Right ventricle myocardium inferior (tissue), 1 donor: ENCODE measurements at regions of chr1 and their contacts with region 1.

Region 1: DNA sequence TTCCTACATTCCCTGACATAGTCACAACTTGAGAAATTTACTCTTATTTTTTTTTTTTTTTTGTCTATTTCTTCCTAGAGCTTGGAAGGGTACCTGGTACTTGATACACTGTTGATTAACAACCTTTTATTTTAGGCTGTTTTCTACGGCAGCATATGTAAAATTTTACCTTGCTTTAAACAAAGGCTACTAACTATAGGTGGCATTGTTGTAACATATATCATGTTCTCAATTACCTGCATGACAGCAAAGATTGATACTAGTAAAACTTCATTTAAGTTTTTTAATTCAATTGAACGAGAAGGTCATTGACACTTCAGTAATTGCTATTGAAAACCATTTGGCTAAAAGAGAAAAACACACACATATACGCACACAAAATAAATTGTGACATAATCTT is 238.3 kb upstream of the ESRRG start:
- DNase-seq: no peak
- ATAC-seq: no peak

Region 2: DNA sequence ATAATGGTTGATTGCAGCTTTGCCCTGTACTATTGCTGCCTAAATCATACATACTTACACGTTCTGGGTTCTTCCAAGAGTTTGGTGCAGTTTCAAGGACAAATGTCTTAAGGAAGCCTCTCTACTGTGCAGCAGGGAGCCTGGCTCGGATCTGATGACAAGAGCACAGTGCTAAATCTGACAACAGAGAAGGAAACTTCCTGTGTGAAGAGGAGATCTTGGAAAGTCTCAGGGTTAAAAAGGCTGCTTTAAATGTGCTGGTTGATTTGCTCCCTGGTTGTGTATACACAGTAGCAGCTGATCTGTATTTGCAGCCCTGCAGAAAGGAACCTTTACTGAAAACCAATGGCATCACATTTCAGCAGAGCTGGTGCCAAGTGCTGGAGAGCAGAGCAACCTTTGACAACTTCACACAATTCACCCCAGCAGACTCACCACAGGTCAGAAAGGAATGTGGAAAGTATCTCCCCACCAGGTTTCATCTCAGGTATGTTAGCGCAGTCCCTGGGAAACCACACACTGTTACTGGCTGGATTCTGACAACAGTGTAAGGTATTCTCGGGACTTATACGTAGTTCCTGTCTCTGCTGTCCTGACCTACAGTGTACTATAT is 116.7 kb after region 1 on chr1:
- intact Hi-C with region 1: loop called (anchors 5 kb)
- DNase-seq: no peak
- ATAC-seq: peak; percentile 78